WTC11 (cell line): ENCODE measurements at regions of chr19 and their contacts with region 1.

Region 1: GRCh38 chr19:37987356-37988332 is 80.6 kb downstream of the SIPA1L3 start:
- DNase-seq: peak; percentile 75
- ATAC-seq: peak; percentile 40
- H3K4me3 Mint-ChIP-seq: no peak overlapping the region
- H3K27ac Mint-ChIP-seq: no peak overlapping the region; the same call in 1 of the 2 replicates
- H3K4me1 Mint-ChIP-seq: peaks cover 59% of the 10 kb centered on the region
- H3K27me3 Mint-ChIP-seq: no peaks in the 10 kb centered on the region
- CTCF ChIP-seq: peak; percentile 54

Region 2: DNA sequence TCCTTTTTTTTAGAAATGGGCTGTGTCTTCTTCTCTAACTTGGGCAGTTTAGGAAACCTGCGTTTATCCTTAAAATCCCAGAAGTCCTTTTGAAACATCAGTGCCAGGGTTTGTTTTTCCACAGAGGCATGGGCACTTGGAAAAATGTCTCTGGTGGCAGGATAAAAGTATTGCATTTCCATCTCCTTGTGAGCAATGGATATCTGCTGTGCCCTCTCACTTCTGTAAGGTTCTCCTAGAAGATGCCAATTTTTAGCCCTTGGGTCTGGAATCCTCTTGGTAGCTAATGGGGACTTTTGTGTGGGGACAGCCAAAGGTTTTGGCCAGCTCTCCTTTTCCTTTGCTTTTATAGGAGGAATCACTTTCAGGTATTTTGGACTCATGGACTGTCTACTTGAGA is 102.3 kb before region 1 on chr19:
- CTCF ChIA-PET with region 1: no interaction called
- POLR2A ChIA-PET with region 1: interaction called, 14 read pairs
- DNase-seq: no peak
- ATAC-seq: no peak
- H3K4me3 Mint-ChIP-seq: no peak overlapping the region
- H3K27ac Mint-ChIP-seq: no peak overlapping the region
- H3K4me1 Mint-ChIP-seq: no peaks in the 10 kb centered on the region
- H3K27me3 Mint-ChIP-seq: peaks cover 19% of the 10 kb centered on the region
- CTCF ChIP-seq: no peak

Region 3: DNA sequence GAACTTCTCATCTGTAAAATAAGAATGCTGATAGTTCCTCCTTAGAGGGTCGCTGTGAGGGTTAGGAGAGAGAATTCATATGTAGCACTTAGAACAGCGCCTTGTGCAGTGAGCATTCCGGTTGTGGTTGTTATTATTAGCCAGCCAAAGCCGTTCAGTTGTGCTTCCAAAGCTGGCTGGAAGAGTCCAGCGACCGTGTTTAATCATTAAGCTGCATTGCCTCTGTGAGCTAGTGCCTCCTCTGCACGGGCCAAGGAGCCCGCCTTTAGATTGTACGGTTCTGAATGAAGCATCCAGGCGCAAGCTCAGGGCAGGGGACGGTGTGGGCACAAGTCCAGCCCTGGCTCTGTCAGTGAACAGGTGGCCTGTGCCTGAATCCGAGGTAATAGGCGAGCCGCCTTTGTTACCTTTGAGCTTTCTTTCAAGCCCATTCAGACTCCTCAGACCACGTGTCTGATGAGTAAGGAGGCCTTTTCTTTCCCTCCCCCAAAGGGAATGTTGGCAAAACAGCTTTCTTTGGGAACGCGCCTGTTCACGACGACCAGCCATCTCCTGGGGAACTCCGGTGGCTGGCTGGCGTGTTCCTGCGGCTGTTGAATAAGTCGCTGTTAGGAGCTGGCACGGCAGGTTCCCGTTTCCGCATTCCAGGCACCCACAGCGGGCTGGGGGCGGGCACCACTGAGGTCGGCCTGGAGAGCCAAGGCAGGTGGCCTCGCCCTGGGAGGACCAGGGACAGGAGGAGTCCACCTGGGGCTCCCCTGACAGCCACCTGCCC is 55.6 kb before region 1 on chr19:
- CTCF ChIA-PET with region 1: interaction called, 14 read pairs
- POLR2A ChIA-PET with region 1: interaction called, 5 read pairs
- DNase-seq: peak; percentile 69
- ATAC-seq: peak; percentile 64
- H3K4me3 Mint-ChIP-seq: peak overlapping the region; percentile 60
- H3K27ac Mint-ChIP-seq: peak overlapping the region; percentile 91
- H3K4me1 Mint-ChIP-seq: peaks cover 60% of the 10 kb centered on the region
- H3K27me3 Mint-ChIP-seq: no peaks in the 10 kb centered on the region; the same call in 1 of the 2 replicates
- CTCF ChIP-seq: no peak

Region 4: DNA sequence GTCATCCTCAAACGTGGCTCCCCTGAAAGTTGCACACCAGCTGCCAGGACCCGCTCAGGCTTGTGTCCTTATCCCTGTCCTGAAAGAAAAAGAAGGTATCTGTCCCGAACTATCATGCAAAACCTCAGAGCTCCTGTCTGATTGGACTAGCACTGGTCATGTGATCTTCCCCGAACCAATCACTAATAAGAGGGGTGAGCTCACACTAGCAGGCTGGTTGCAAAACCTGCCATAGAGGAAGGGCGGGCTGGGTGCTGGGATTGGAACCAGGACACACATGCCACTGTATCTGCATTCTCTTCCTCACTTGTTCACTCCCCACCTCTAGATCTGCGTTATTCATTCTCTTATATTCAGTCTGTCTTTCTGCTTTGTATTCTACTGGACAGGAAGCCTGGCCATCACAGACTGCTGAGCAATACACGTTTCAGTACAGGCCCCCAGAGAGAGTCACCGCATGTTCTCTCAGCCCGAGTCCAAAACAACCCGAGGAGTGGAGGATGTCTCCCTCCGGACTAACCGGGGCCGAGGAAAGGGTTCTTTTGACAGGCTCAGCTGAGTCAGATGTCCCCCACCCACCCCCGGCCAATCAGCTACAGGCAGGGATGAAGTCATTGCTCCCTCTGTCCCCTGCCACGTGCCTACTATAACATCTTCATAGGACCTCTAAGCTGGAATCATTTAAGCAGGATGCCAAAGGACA is 17.0 kb after region 1 on chr19:
- CTCF ChIA-PET with region 1: interaction called, 41 read pairs
- POLR2A ChIA-PET with region 1: interaction called, 28 read pairs
- DNase-seq: peak; percentile 71
- ATAC-seq: peak; percentile 87
- H3K4me3 Mint-ChIP-seq: no peak overlapping the region
- H3K27ac Mint-ChIP-seq: no peak overlapping the region
- H3K4me1 Mint-ChIP-seq: peaks cover 4% of the 10 kb centered on the region; the same call in 1 of the 2 replicates
- H3K27me3 Mint-ChIP-seq: no peaks in the 10 kb centered on the region
- CTCF ChIP-seq: no peak

Region 5: GRCh38 chr19:38044267-38045111 is 56.8 kb after region 1 on chr19:
- CTCF ChIA-PET with region 1: interaction called, 10 read pairs
- POLR2A ChIA-PET with region 1: no interaction called
- DNase-seq: no peak
- ATAC-seq: peak; percentile 23; the same call in 1 of the 2 replicates
- H3K4me3 Mint-ChIP-seq: no peak overlapping the region
- H3K27ac Mint-ChIP-seq: no peak overlapping the region; the same call in 1 of the 2 replicates
- H3K4me1 Mint-ChIP-seq: peaks cover 54% of the 10 kb centered on the region
- H3K27me3 Mint-ChIP-seq: no peaks in the 10 kb centered on the region; the same call in 1 of the 2 replicates
- CTCF ChIP-seq: no peak